PC-9 (cell line): ENCODE measurements at regions of chr6 and their contacts with region 1.

Region 1: GRCh38 chr6:53171605-53172446 is 23.2 kb upstream of the GCM1 start:
- DNase-seq: peak; percentile 58 to 88
- H3K4me3 ChIP-seq: no peak overlapping the region
- H3K27ac ChIP-seq: no peak overlapping the region
- H3K4me1 ChIP-seq: peaks cover 33% of the 10 kb centered on the region
- H3K27me3 ChIP-seq: no peaks in the 10 kb centered on the region
- CTCF ChIP-seq: peak; percentile 100

Region 2: DNA sequence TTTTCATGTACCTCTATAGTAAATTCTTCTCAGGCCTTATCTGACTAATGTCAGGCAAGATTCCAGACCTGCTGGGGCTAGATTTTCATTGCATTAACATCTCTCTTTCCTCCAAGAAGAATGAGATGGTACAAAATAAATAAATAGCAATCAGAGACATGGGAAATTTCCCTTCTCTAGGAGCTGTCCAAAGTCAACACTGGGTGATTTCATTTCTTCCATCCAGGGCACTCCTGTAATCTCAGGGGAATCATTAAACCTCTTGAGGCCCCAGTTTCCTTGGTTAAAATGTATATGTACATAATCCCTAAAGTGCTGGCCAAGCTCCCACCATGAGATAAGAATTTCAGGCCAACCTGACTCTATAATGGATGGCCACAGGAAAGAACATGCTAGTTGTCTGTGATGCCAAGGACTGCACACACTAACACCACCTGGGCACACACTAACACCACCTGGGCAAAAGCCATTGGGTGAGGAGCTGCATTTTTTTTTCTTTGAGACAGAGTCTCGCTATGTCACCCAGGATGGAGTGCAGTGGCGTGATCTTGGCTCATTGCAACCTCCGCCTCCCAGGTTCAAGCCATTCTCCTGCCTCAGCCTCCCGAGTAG is 928.4 kb before region 1 on chr6:
- CTCF ChIA-PET with region 1: no interaction called
- POLR2A ChIA-PET with region 1: no interaction called
- intact Hi-C with region 1: no loop called
- DNase-seq: no peak
- H3K4me3 ChIP-seq: no peak overlapping the region
- H3K27ac ChIP-seq: no peak overlapping the region
- H3K4me1 ChIP-seq: no peaks in the 10 kb centered on the region
- H3K27me3 ChIP-seq: peaks cover 86% of the 10 kb centered on the region
- CTCF ChIP-seq: no peak

Region 3: GRCh38 chr6:53058388-53059195 is 113.2 kb before region 1 on chr6:
- CTCF ChIA-PET with region 1: no interaction called
- POLR2A ChIA-PET with region 1: no interaction called
- intact Hi-C with region 1: no loop called
- DNase-seq: no peak
- H3K4me3 ChIP-seq: no peak overlapping the region
- H3K27ac ChIP-seq: no peak overlapping the region
- H3K4me1 ChIP-seq: peaks cover 20% of the 10 kb centered on the region
- H3K27me3 ChIP-seq: no peaks in the 10 kb centered on the region
- CTCF ChIP-seq: no peak

Region 4: GRCh38 chr6:53112404-53112803 is 59.4 kb before region 1 on chr6:
- CTCF ChIA-PET with region 1: interaction called, 5 read pairs
- POLR2A ChIA-PET with region 1: interaction called, 3 read pairs
- intact Hi-C with region 1: loop called (anchors 1 kb)
- DNase-seq: peak; percentile 84 to 97
- H3K4me3 ChIP-seq: peak overlapping the region; percentile 41; the same call in 1 of the 2 replicates
- H3K27ac ChIP-seq: peak overlapping the region; percentile 88
- H3K4me1 ChIP-seq: peaks cover 61% of the 10 kb centered on the region
- H3K27me3 ChIP-seq: no peaks in the 10 kb centered on the region
- CTCF ChIP-seq: no peak

Region 5: GRCh38 chr6:53159558-53159957 is 12.3 kb before region 1 on chr6:
- CTCF ChIA-PET with region 1: no interaction called
- POLR2A ChIA-PET with region 1: no interaction called
- intact Hi-C with region 1: no loop called
- DNase-seq: peak in 1 of 2 experiments; percentile 62
- H3K4me3 ChIP-seq: no peak overlapping the region
- H3K27ac ChIP-seq: no peak overlapping the region
- H3K4me1 ChIP-seq: peaks cover 31% of the 10 kb centered on the region
- H3K27me3 ChIP-seq: no peaks in the 10 kb centered on the region
- CTCF ChIP-seq: no peak

Region 6: GRCh38 chr6:53359072-53359842 is 187.4 kb after region 1 on chr6:
- CTCF ChIA-PET with region 1: no interaction called
- POLR2A ChIA-PET with region 1: no interaction called
- intact Hi-C with region 1: loop called (anchors 5 kb)
- DNase-seq: peak; percentile 88 to 97
- H3K4me3 ChIP-seq: peak overlapping the region; percentile 61
- H3K27ac ChIP-seq: peak overlapping the region; percentile 84
- H3K4me1 ChIP-seq: peaks cover 36% of the 10 kb centered on the region
- H3K27me3 ChIP-seq: no peaks in the 10 kb centered on the region
- CTCF ChIP-seq: no peak

Region 7: DNA sequence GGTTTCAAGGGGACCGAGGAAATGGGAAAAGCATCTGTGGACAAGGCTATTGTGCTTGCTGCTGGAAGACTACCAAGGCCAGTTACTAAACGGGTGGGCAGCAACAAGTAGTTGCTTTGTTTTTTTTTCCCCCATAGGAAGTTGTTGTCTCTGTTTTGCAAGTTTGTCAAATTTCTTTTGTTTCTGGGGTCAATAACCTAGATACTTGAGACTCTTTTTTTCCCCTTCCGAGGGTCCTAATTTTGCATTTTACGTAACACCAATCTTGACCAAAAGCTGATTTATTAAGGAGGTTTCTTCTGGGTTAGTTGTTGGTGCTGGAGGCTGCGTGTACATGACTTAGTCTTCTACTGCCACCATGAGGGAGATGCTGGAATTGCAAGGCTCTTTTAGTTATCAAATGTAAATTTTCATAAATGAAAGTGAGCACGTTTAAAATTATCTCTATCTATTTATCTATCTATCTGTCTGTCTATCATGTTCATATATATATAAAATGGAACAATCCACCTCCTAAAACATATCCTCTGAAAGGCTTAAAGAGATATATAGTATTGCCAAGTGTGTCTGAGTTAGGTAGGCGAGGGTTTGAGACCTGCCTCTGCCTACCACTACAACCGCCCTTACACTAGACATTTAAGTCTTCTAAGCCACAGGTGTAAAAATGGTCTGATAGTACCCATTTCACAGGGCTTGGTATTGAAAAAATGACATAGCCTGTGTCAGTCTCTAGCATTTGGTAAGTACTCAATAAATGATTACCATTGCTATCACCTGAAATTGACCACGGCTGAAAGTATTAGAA is 312.9 kb after region 1 on chr6:
- CTCF ChIA-PET with region 1: interaction called, 3 read pairs
- POLR2A ChIA-PET with region 1: no interaction called
- intact Hi-C with region 1: loop called (anchors 1 kb)
- DNase-seq: peak in 1 of 2 experiments; percentile 42
- H3K4me3 ChIP-seq: no peak overlapping the region
- H3K27ac ChIP-seq: no peak overlapping the region
- H3K4me1 ChIP-seq: no peaks in the 10 kb centered on the region
- H3K27me3 ChIP-seq: no peaks in the 10 kb centered on the region
- CTCF ChIP-seq: peak; percentile 98

Region 8: GRCh38 chr6:53615633-53616449 is 444.0 kb after region 1 on chr6:
- CTCF ChIA-PET with region 1: no interaction called
- POLR2A ChIA-PET with region 1: no interaction called
- intact Hi-C with region 1: no loop called
- DNase-seq: peak; percentile 73 to 100
- H3K4me3 ChIP-seq: peak overlapping the region; percentile 49
- H3K27ac ChIP-seq: peak overlapping the region; percentile 100
- H3K4me1 ChIP-seq: peaks cover 82% of the 10 kb centered on the region
- H3K27me3 ChIP-seq: no peaks in the 10 kb centered on the region
- CTCF ChIP-seq: 0 out of 2 replicates have a peak, but pooled peaks have one; percentile 28

Region 9: GRCh38 chr6:53725791-53726431 is 554.1 kb after region 1 on chr6:
- CTCF ChIA-PET with region 1: no interaction called
- POLR2A ChIA-PET with region 1: no interaction called
- intact Hi-C with region 1: loop called (anchors 5 kb)
- DNase-seq: peak in 1 of 2 experiments; percentile 72
- H3K4me3 ChIP-seq: no peak overlapping the region
- H3K27ac ChIP-seq: no peak overlapping the region
- H3K4me1 ChIP-seq: peaks cover 55% of the 10 kb centered on the region
- H3K27me3 ChIP-seq: no peaks in the 10 kb centered on the region
- CTCF ChIP-seq: peak; percentile 92